ENCODE measurements at regions of chr12 and their contacts with region 1.

Region 1: GRCh38 chr12:68786929-68787328 is 21.0 kb upstream of the MDM2 start:
- DNase-seq: no peak
- H3K4me3 ChIP-seq: peak overlapping the region; percentile 7
- H3K27ac ChIP-seq: peak overlapping the region; percentile 77
- H3K4me1 ChIP-seq: peaks cover 78% of the 10 kb centered on the region
- CTCF ChIP-seq: peak; percentile 65

Region 2: DNA sequence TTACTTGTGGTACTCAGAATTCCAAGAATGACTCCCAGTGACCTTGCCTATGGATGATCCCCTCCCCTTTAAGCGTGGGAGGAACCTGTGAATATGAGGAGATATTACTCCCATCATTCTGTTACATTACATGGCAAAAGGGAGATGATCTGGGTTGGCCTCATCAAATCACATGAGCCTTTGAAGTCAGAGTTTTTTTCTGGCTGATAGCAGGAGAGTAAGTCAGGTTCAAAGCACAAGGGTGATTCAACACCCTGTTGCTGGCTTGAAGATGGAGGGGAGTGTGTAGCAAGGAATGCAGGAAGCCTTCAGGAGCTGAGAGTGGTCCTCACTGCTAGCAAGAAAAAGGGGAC is 11.9 kb after region 1 on chr12:
- CTCF ChIA-PET with region 1: no interaction called
- POLR2A ChIA-PET with region 1: interaction called, 10 read pairs
- intact Hi-C with region 1: no loop called
- DNase-seq: no peak
- H3K4me3 ChIP-seq: no peak overlapping the region
- H3K27ac ChIP-seq: no peak overlapping the region
- H3K4me1 ChIP-seq: peaks cover 29% of the 10 kb centered on the region
- CTCF ChIP-seq: no peak